ENCODE measurements at regions of chr3 and their contacts with region 1.

Region 1: DNA sequence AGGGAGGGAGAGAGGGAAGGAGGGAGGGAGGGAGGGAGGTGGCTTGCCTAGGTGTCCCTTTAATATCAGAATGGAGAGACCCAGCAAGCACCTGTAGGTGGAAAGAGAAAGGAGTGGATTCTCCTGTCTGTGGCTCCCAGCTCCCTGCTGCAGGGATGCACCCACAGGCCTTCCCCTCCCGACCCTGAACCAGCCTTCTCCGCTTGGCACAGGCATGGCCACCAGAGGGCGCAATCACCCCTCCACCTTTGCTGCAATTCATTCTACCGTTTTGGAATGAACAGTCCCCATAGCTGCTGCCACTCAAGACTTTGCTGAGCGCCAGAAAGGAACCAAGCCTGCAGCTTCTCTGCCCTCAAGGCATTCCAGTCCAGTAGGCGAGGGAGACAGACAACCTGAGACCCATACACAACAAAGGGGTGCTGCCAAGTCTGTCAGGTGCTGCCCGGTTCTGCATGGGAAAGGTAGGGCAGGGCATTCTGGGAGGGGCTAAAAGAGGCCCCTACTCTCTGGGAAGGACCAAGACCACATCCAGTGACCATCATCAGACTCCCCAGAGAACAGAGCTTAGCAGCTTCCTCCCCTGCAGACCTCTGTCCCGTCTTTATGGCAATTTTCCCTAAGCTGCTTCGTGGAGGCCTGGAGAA is 4.9 kb downstream of the TLR9 start:
- DNase-seq: peak; percentile 68
- H3K4me3 ChIP-seq: no peak overlapping the region
- H3K27ac ChIP-seq: no peak overlapping the region
- H3K4me1 ChIP-seq: peaks cover 32% of the 10 kb centered on the region
- H3K27me3 ChIP-seq: no peaks in the 10 kb centered on the region
- CTCF ChIP-seq: peak; percentile 92 to 97
- POLR2A ChIP-seq: no peak

Region 2: DNA sequence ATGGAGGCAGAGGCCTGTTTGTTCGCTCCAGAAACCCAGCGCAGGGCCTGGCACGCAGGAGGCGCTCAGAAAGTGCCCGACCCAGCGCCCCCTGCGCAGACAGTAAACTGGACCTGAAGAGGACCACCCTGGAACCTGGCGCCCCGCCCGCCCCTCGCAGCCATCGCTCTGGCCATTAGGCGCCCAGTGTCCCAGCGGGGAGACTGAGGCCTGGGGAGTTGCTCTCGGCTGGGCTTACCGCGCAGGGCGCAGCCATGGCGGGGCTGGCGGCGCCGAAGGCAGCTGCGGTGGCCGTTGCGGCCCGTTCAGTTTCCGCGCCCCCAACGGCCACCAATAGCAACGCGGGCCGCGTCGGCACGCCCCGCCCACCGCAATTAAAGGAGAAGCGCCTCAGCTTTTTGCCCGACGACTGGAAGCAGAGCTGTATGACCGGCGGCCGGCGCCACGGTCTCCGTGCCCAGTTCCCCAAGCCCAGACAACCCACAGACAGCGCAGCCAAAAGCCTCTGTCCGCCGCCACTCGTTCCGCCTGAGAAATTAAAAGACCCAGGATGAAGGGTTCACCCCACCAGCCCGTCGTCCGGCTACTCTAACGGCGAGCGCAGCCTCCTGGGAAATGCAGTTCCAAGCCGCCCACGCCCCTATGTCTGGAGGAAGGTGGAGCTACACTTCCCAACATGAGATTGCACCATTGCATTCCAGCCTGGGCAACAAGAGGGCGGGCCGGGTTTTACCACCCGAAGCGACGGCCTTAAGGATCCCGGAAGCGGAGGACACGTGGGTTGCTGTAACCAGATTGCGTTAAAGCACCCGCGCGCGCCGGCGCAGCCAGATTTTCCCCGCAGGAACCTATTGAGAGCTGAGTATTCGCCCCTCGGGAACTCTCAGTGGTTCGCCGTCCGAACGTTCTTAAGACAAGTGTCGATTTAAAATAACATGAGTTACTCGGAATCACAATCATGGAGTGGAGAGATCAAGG is 66.1 kb before region 1 on chr3 and contains the start of gene POC1A:
- CTCF ChIA-PET with region 1: interaction called, 5 read pairs
- POLR2A ChIA-PET with region 1: no interaction called
- dilution Hi-C with region 1: no loop called
- intact Hi-C with region 1: loop called (anchors 1 kb)
- DNase-seq: peak; percentile 97
- H3K4me3 ChIP-seq: peak within 1 kb of the TSS; percentile 64 to 69 (median 65)
- H3K27ac ChIP-seq: peak within 1 kb of the TSS; percentile 58
- H3K4me1 ChIP-seq: peaks cover 14% of the 10 kb centered on the region
- H3K27me3 ChIP-seq: no peaks in the 10 kb centered on the region
- CTCF ChIP-seq: no peak
- POLR2A ChIP-seq: peak; percentile 64
- total RNA-seq, gene POC1A: 16.7 and 19.4 TPM in 2 replicates

Region 3: DNA sequence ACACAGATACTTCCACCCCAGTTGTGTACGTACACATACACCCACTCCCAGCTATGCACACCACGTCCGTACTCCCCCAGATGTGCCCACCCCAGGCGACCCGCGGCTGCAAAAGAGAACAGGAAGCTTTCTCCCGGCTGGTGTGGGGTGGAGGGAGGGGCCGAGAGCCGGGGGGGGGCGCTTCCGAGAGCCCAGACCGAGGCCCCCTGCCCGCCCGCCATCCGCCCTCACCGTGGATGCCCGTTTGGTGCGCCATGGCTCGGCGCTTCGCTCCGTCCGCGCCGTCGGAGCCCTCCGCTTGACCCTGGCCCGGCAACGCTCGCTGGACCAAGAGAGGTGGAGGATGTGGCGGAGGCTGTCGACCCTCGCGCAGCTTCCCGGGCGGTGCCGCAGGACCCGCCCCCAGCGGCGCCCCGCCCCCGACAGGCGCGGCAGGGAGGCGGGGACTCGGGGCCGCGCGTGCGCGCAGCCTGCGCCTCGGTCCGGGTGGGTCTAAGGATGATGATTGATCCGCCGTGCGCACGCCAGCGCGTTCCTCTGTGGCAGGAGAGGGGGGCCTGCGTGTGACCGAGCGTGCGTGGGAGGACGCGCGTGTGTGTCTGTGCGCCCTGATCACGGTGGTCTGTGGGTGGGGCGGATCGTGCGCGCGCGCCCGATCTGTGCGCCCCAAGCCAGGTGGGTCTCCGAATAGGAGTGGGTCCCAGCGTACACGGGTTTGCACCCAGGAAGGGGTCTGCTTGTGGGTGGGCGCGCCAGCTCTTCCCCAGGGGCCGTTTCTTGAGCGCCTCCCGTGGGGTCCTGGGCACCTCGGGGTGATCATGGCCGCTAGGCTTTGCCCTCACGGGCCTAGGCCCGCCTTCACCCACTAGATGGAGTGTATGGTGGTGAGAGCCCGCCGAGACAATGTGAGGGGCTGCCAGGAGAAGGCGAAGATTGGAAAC is 18.5 kb after region 1 on chr3 and contains the start of gene TWF2:
- CTCF ChIA-PET with region 1: interaction called, 104 read pairs
- POLR2A ChIA-PET with region 1: interaction called, 3 read pairs
- dilution Hi-C with region 1: no loop called
- intact Hi-C with region 1: loop called (anchors 1 kb)
- DNase-seq: peak; percentile 82
- H3K4me3 ChIP-seq: peak within 1 kb of the TSS; percentile 20 to 98 (median 66)
- H3K27ac ChIP-seq: peak within 1 kb of the TSS; percentile 80
- H3K4me1 ChIP-seq: peaks cover 23% of the 10 kb centered on the region
- H3K27me3 ChIP-seq: no peaks in the 10 kb centered on the region
- CTCF ChIP-seq: peak; percentile 36 to 62
- POLR2A ChIP-seq: peak; percentile 87
- total RNA-seq, gene TWF2: 82.6 and 82.9 TPM in 2 replicates

Region 4: DNA sequence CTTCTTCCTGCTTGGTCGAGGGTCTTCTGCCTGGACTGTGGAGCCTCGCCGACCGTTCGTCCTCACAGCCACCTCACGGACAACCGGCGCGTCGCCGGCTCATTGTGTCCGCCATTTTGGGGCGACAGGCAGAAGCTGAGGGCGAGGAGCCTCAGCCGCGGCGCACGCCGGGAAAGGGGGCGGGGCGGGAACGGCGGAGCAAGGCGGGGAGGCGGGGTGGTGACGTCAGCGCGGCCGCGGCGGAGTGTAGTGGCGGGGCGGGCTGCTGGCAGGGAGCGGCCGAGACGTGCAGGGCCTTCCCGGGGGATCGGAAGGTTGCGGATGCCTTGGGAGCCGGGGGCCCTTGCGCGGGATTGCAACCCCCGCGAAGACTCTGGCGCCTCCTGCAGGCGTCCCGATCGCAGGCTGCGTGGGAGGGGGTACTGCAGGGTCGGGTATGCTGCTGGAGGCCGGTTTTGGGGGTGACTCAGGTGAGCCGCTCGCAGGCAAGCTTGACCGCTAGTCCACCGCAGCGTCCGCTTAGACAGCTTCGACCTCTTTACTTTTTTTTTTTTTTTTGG is 58.1 kb after region 1 on chr3 and contains the start of gene WDR82:
- CTCF ChIA-PET with region 1: interaction called, 24 read pairs
- POLR2A ChIA-PET with region 1: interaction called, 8 read pairs
- dilution Hi-C with region 1: no loop called
- intact Hi-C with region 1: loop called (anchors 1 kb)
- DNase-seq: peak; percentile 94
- H3K4me3 ChIP-seq: peak within 1 kb of the TSS; percentile 53 to 96 (median 87)
- H3K27ac ChIP-seq: peak within 1 kb of the TSS; percentile 62
- H3K4me1 ChIP-seq: peaks cover 34% of the 10 kb centered on the region
- H3K27me3 ChIP-seq: no peaks in the 10 kb centered on the region
- CTCF ChIP-seq: peak; percentile 35 to 57
- POLR2A ChIP-seq: peak; percentile 95
- total RNA-seq, gene WDR82: 71.3 and 71.8 TPM in 2 replicates

Region 5: GRCh38 chr3:52339612-52340011 is 119.1 kb after region 1 on chr3:
- CTCF ChIA-PET with region 1: interaction called, 133 read pairs
- POLR2A ChIA-PET with region 1: no interaction called
- dilution Hi-C with region 1: no loop called
- intact Hi-C with region 1: loop called (anchors 1 kb)
- DNase-seq: peak; percentile 74
- H3K4me3 ChIP-seq: no peak overlapping the region
- H3K27ac ChIP-seq: no peak overlapping the region
- H3K4me1 ChIP-seq: no peaks in the 10 kb centered on the region
- H3K27me3 ChIP-seq: no peaks in the 10 kb centered on the region
- CTCF ChIP-seq: peak; percentile 48 to 50
- POLR2A ChIP-seq: no peak

Measured in endothelial cell of umbilical vein (primary cell).